ENCODE measurements at regions of chr1 and their contacts with region 1.

Region 1: DNA sequence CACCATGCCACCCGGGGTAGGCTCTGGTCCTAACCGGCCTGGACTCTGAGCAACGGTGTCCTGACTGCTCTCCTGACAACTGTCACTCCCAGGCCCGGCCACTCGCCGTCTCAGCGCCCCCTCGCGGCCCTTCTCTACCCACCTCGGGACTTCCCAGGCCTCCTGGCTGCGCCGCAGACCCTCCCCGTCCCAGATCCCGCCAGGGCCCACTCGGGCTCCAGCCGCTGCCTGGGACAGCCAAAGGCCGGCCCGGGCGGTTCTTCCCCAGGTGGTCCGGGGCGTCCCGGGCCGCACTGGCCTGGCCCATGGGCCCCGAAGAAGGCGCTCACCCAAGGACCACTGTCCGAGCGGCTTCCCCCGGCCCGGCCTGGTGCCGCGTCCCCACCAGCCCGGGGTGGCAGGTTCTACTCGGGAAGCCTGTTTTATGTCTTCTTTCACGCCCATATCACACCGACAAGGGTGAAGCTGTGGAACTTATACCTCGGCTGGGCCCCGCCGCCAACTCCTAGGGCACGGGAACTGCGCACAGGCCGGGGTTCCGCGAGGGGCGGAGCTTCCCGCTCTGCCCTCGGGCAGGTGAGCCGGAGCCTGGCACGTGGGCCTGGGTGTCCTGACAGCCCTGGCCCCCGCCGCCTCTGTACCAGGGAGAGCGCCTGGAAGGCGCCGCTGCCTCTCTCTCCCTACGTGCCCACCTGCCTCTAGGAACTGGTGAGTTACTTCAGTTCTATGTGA is 138.3 kb downstream of the TTLL7 start:
- DNase-seq: peak; percentile 73
- ATAC-seq: peak; percentile 91
- H3K4me3 Mint-ChIP-seq: peak overlapping the region; percentile 79
- H3K27ac Mint-ChIP-seq: peak overlapping the region; percentile 64
- H3K4me1 Mint-ChIP-seq: peaks cover 7% of the 10 kb centered on the region
- H3K27me3 Mint-ChIP-seq: no peaks in the 10 kb centered on the region
- CTCF ChIP-seq: peak; percentile 81

Region 2: GRCh38 chr1:83583351-83584014 is 277.2 kb before region 1 on chr1:
- CTCF ChIA-PET with region 1: no interaction called
- POLR2A ChIA-PET with region 1: no interaction called
- intact Hi-C with region 1: loop called (anchors 10 kb)
- DNase-seq: no peak
- ATAC-seq: no peak
- H3K4me3 Mint-ChIP-seq: no peak overlapping the region
- H3K27ac Mint-ChIP-seq: no peak overlapping the region
- H3K4me1 Mint-ChIP-seq: peaks cover 2% of the 10 kb centered on the region
- H3K27me3 Mint-ChIP-seq: no peaks in the 10 kb centered on the region
- CTCF ChIP-seq: no peak

Region 3: DNA sequence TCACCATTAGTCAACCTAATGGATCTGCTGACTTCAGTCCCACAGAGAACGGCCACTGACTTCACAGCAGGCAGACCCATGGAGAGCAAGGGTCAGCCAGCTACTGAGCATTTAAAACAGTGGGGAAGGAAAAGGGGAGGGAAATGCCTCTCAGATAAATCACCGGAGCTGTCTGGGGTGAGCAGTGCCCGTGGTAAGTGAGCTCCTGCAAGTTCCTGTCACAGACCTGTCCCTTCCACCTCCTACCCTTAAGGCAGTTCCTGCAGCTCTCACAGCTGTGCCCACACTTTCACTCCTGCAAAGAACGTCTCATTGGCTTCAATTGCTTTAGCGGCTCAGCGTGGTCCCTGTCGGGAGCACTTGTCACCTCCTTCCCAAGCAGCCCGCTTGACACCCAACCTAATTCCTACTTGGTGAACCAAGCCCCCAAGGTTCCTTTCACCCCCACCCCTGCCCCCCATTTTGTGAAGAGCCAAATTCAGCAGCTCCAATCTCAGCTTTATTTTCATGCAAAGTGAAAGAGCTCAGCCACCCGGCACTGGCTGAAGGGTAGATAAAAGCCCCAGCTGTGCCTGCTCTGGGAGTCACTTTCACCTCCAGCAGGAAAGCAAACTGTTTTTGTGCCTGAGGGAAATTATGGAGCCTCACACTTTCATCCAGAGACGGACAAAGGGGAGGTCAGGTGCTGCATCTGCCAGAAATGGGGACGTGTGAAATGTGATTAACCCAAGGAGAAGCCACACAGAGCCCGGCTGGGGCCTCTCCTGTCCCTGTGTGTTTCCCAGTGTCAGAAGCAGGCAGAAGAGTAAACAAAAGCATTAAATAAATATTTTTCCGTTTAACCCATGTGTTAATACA is 167.9 kb before region 1 on chr1:
- CTCF ChIA-PET with region 1: no interaction called
- POLR2A ChIA-PET with region 1: no interaction called
- intact Hi-C with region 1: loop called (anchors 5 kb)
- DNase-seq: no peak
- ATAC-seq: peak; percentile 63
- H3K4me3 Mint-ChIP-seq: peak overlapping the region; percentile 85
- H3K27ac Mint-ChIP-seq: peak overlapping the region; percentile 73
- H3K4me1 Mint-ChIP-seq: peaks cover 51% of the 10 kb centered on the region
- H3K27me3 Mint-ChIP-seq: peaks cover 4% of the 10 kb centered on the region
- CTCF ChIP-seq: no peak

Region 4: GRCh38 chr1:84090447-84091245 is 230.0 kb after region 1 on chr1:
- CTCF ChIA-PET with region 1: no interaction called
- POLR2A ChIA-PET with region 1: no interaction called
- intact Hi-C with region 1: no loop called
- DNase-seq: no peak
- ATAC-seq: peak; percentile 31
- H3K4me3 Mint-ChIP-seq: peak overlapping the region; percentile 53
- H3K27ac Mint-ChIP-seq: peak overlapping the region; percentile 67
- H3K4me1 Mint-ChIP-seq: peaks cover 21% of the 10 kb centered on the region
- H3K27me3 Mint-ChIP-seq: no peaks in the 10 kb centered on the region
- CTCF ChIP-seq: no peak

Region 5: GRCh38 chr1:84412316-84412942 is 551.8 kb after region 1 on chr1:
- CTCF ChIA-PET with region 1: no interaction called
- POLR2A ChIA-PET with region 1: no interaction called
- intact Hi-C with region 1: no loop called
- DNase-seq: no peak
- ATAC-seq: no peak
- H3K4me3 Mint-ChIP-seq: no peak overlapping the region
- H3K27ac Mint-ChIP-seq: no peak overlapping the region
- H3K4me1 Mint-ChIP-seq: no peaks in the 10 kb centered on the region
- H3K27me3 Mint-ChIP-seq: no peaks in the 10 kb centered on the region
- CTCF ChIP-seq: no peak

Measured in activated B cell treated with CpG ODN at 0.5 μM for 24 hours (primary cell).